HEK293T (cell line): ENCODE measurements at regions of chr6 and their contacts with region 1.

Region 1: GRCh38 chr6:31525932-31526591 is 2.7 kb upstream of the MCCD1 start:
- DNase-seq: no peak

Region 2: GRCh38 chr6:31493875-31494694 is 32.0 kb before region 1 on chr6:
- CTCF ChIA-PET with region 1: no interaction called
- POLR2A ChIA-PET with region 1: interaction called, 11 read pairs
- DNase-seq: peak; percentile 72

Region 3: DNA sequence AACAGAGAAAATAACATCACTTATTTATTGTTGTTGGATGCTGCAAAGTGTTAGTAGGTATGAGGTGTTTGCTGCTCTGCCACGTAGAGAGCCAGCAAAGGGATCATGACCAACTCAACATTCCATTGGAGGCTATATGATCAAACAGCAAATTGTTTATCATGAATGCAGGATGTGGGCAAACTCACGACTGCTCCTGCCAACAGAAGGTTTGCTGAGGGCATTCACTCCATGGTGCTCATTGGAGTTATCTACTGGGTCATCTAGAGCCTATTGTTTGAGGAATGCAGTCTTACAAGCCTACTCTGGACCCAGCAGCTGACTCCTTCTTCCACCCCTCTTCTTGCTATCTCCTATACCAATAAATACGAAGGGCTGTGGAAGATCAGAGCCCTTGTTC is 16.1 kb before region 1 on chr6:
- CTCF ChIA-PET with region 1: no interaction called
- POLR2A ChIA-PET with region 1: no interaction called
- DNase-seq: no peak